ENCODE measurements at regions of chr1 and their contacts with region 1.

Region 1: DNA sequence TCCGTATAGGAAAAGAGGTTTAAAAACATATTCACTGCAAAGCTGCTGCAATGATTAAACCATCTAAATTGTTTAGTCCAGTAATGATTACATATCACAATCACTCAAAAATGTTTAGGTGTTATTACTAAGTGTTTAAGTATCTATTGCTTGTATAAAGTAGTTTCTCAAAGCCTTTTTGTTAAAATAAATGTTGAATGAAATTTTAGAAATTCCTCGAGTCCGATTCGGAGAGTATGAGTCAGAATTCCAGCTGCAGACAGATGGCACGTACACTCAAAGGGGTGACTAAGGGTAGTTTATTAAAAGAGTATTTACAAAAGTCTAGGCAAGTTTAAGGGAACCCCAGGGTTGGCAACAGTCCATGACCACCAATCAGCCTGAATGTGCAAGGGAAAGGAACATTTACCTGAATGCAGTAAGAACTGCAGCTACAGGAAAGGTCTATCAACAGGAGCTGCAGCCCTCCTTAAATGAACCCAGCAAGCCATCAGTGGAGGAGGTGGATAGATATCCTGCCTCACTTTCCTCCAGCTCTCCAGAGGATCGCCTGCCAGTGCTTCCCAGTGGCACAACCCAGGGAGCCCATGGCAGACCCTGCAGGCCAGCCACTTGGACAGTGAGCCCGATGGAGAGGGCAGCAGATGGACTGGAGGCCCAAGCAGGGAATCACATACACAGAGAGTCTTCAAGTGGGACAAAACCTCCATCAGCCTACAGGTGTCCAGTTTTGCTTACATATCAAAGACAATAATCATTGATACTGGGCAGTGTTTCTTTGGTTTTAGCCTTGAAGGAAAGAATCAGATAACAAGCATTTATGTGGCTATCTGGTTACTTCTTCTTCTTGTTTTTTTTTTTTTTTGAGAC is 92.1 kb upstream of the SLC44A3 start:
- DNase-seq: peak; percentile 99
- ATAC-seq: peak; percentile 59
- H3K4me3 ChIP-seq: no peak overlapping the region
- H3K27ac ChIP-seq: peak overlapping the region; percentile 95
- H3K4me1 ChIP-seq: peaks cover 35% of the 10 kb centered on the region
- H3K27me3 ChIP-seq: no peaks in the 10 kb centered on the region
- CTCF ChIP-seq: no peak
- POLR2A ChIP-seq: no peak
- RAD21 ChIP-seq: peak; percentile 16; the same call in 1 of the 2 replicates

Region 2: DNA sequence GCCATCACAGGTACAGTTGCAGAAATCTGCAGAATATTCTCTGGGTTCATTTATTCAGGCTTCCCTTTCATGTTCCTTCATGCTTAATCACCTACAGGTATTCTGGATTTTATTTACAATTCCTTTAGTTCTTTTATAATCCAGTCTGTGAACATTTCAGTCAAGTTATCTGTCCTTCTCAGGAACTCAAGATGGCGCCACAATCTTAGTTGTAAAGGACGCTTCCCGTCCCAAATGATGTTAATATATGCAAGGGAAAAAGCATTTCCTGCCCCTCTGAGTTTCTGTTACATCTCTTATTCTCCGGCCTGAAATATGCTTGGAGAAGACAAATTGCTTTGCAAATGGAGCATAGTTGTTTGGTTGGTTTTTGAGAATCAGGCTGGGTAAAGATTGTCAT is 205.8 kb before region 1 on chr1:
- CTCF ChIA-PET with region 1: no interaction called
- POLR2A ChIA-PET with region 1: no interaction called
- dilution Hi-C with region 1: no loop called
- in situ Hi-C with region 1: no loop called
- intact Hi-C with region 1: no loop called
- DNase-seq: peak; percentile 72
- ATAC-seq: peak; percentile 46
- H3K4me3 ChIP-seq: no peak overlapping the region
- H3K27ac ChIP-seq: no peak overlapping the region
- H3K4me1 ChIP-seq: peaks cover 3% of the 10 kb centered on the region; the same call in 1 of the 2 replicates
- H3K27me3 ChIP-seq: no peaks in the 10 kb centered on the region
- CTCF ChIP-seq: peak; percentile 73
- POLR2A ChIP-seq: no peak
- RAD21 ChIP-seq: peak; percentile 82

Region 3: GRCh38 chr1:94648225-94649007 is 79.7 kb before region 1 on chr1:
- CTCF ChIA-PET with region 1: no interaction called
- POLR2A ChIA-PET with region 1: interaction called, 3 read pairs
- dilution Hi-C with region 1: no loop called
- in situ Hi-C with region 1: no loop called
- intact Hi-C with region 1: loop called (anchors 1 kb)
- DNase-seq: peak; percentile 100
- ATAC-seq: peak; percentile 77
- H3K4me3 ChIP-seq: no peak overlapping the region
- H3K27ac ChIP-seq: peak overlapping the region; percentile 99
- H3K4me1 ChIP-seq: peaks cover 25% of the 10 kb centered on the region
- H3K27me3 ChIP-seq: no peaks in the 10 kb centered on the region
- CTCF ChIP-seq: no peak
- POLR2A ChIP-seq: no peak
- RAD21 ChIP-seq: peak; percentile 12; the same call in 1 of the 2 replicates

Region 4: GRCh38 chr1:94739521-94740061 is 11.5 kb after region 1 on chr1:
- CTCF ChIA-PET with region 1: interaction called, 3 read pairs
- POLR2A ChIA-PET with region 1: interaction called, 13 read pairs
- dilution Hi-C with region 1: no loop called
- in situ Hi-C with region 1: no loop called
- intact Hi-C with region 1: no loop called
- DNase-seq: peak; percentile 97
- ATAC-seq: peak; percentile 65
- H3K4me3 ChIP-seq: no peak overlapping the region
- H3K27ac ChIP-seq: peak overlapping the region; percentile 90
- H3K4me1 ChIP-seq: peaks cover 40% of the 10 kb centered on the region
- H3K27me3 ChIP-seq: no peaks in the 10 kb centered on the region
- CTCF ChIP-seq: no peak
- POLR2A ChIP-seq: no peak
- RAD21 ChIP-seq: 0 out of 2 replicates have a peak, but pooled peaks have one; percentile 11

Region 5: DNA sequence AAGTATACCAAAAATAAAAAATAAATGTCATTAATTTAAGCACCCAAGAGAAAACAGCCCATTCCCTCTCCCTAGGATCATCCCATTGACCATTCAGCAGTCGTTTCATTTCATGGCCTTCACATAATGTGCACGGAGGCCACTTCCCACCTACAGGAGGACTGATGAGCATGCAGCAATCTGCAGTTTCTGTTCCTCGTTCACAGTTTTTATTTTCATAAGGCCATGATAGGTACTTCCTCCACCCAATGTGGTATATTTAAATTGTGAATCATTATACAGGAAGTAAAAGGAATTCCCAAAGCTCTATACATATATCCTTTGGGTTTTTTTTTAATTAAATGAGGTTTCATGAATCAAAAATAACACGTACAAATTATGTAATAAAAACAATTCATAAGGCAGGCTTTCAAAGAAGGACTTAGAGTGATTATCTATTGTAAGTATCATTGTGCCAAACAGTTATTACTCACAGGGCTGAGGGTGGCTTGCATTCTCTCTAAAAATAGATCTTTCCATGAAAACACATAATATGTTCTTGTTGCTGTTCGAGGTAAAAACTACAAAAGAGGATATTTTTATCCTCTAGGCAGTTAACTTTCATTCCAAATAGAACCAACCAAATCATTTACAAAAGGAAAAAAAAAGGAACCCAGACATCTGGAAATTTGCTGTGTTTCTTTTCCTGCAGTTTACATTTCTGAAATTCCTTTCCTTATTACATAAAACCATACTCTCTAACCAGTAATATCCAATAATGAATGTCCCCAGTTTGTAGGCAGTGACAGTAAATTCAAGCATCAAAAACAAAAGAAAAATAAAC is 64.6 kb after region 1 on chr1:
- CTCF ChIA-PET with region 1: no interaction called
- POLR2A ChIA-PET with region 1: no interaction called
- dilution Hi-C with region 1: no loop called
- in situ Hi-C with region 1: no loop called
- intact Hi-C with region 1: loop called (anchors 2 kb)
- DNase-seq: peak; percentile 79
- ATAC-seq: peak; percentile 67
- H3K4me3 ChIP-seq: no peak overlapping the region
- H3K27ac ChIP-seq: peak overlapping the region; percentile 83
- H3K4me1 ChIP-seq: peaks cover 9% of the 10 kb centered on the region
- H3K27me3 ChIP-seq: no peaks in the 10 kb centered on the region
- CTCF ChIP-seq: 0 out of 2 replicates have a peak, but pooled peaks have one; percentile 17
- POLR2A ChIP-seq: no peak
- RAD21 ChIP-seq: peak; percentile 32

Measured in IMR-90 (cell line).